ENCODE measurements at regions of chr18 and their contacts with region 1.

Region 1: DNA sequence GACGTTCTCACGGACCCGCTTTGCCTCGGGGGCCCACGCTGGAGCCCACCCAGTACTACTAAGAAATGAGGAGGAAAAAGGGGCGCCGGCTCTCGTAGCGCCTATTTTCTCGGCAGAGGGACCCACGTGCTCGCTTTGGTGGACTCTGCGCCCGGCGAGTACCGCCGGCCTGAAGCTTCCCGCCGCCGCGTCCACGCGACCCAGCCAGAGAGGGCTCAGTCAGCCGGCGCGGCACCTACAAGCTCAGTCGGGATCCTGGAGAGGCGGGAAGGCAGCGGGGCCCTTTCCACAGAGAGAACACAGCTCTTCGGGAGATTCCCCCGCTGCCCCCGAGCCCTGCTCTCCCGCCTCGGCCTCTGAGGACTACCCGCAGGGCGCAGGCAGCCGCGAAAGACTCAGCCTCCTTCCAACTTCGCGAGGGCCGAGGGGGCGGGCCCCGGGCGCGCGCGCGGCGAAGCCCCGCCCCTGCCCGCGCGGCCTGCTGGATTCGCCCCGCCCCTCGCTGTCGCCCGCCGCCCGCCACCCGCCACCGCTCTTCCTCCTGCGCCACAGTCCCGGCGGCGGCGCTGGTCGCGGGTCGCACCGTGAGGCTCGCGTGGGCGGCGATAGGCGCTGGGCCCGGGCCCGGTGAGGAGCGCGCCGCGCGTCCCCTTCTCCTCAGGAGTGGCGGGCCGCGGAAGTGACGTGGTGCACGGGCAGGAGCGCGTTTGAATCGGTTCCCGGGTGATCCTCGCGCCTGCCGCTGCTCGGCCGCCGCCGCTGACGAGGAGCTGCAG is at the start of gene SMCHD1:
- DNase-seq: peak; percentile 88
- ATAC-seq: peak; percentile 76
- H3K4me3 Mint-ChIP-seq: peak within 1 kb of the TSS; percentile 92
- H3K27ac Mint-ChIP-seq: peak within 1 kb of the TSS; percentile 95
- H3K4me1 Mint-ChIP-seq: peaks cover 41% of the 10 kb centered on the region
- H3K27me3 Mint-ChIP-seq: no peaks in the 10 kb centered on the region
- total RNA-seq, gene SMCHD1: 137 to 142 TPM

Region 2: DNA sequence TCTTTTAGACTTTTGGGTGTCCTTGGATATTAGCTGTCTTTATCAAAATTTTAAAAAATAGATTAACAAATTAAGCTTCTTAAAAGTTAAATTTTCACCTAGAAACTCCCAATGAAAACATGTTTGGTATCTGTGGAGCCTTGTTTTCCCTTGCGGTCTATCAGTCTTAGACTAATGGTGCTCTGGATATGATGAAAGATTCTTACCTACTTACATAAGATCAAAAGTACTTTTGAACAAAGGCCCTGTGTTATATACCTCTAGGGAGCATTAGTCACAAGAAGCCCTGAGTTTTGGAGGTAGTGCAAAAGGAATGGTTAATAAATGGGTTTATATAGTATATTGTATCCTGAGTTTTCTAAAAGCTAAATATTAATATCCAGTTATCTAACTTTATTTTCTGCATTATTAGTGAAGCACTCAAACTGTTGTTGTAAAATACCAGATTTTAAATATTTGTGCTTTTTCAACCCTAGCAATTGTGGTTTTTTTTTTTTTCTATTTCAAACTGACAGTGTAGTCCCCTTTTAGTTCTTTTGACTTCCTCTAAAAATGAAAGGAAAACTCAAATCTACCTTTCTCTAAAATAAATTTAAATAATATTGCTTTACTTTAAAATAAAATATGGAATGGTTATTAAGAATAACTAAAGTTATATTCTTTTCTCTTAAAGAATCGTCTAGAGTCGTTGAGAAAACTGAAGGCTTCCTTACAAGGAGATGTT is 65.9 kb before region 1 on chr18:
- CTCF ChIA-PET with region 1: interaction called, 12 read pairs
- POLR2A ChIA-PET with region 1: interaction called, 38 read pairs
- DNase-seq: no peak
- ATAC-seq: peak; percentile 72
- H3K4me3 Mint-ChIP-seq: peak overlapping the region; percentile 29
- H3K27ac Mint-ChIP-seq: peak overlapping the region; percentile 84
- H3K4me1 Mint-ChIP-seq: peaks cover 50% of the 10 kb centered on the region
- H3K27me3 Mint-ChIP-seq: no peaks in the 10 kb centered on the region

Region 3: GRCh38 chr18:2627821-2628276 is 27.5 kb before region 1 on chr18:
- CTCF ChIA-PET with region 1: interaction called, 3 read pairs
- POLR2A ChIA-PET with region 1: interaction called, 16 read pairs
- DNase-seq: no peak
- ATAC-seq: peak; percentile 65
- H3K4me3 Mint-ChIP-seq: no peak overlapping the region
- H3K27ac Mint-ChIP-seq: no peak overlapping the region
- H3K4me1 Mint-ChIP-seq: peaks cover 16% of the 10 kb centered on the region
- H3K27me3 Mint-ChIP-seq: no peaks in the 10 kb centered on the region

Region 4: GRCh38 chr18:2641638-2642037 is 13.7 kb before region 1 on chr18:
- CTCF ChIA-PET with region 1: interaction called, 33 read pairs
- POLR2A ChIA-PET with region 1: interaction called, 295 read pairs
- DNase-seq: no peak
- ATAC-seq: peak; percentile 67
- H3K4me3 Mint-ChIP-seq: peak overlapping the region; percentile 71
- H3K27ac Mint-ChIP-seq: no peak overlapping the region
- H3K4me1 Mint-ChIP-seq: peaks cover 52% of the 10 kb centered on the region
- H3K27me3 Mint-ChIP-seq: no peaks in the 10 kb centered on the region

Region 5: DNA sequence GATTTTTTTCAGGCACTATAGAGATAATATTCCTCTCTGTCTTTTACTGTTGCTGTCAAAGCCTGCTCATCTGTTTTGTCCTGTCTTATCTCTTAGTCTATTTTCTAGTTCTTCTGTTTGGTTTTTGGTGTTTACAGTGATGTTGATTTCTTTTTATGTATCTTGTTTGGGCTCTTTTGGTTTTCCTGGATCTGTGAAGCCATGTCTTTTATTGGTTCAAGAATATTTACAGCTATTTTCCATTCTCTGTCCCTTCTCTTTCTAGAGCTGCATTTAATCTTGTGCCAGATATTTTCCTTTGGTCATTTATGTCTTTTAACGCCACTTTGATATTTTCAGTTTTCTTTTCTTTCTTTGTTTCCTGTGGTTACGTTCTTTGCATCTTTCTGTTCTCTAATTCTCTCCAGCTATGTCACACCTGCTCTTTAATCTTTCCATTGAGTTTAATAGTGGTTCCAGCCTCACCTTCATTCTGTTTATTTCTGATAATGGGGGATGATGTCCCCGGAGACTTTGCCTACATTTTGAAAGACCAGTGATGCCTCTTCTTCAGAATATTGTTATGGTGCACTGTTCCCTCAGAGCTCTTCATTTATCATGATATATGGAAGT is 32.1 kb after region 1 on chr18:
- CTCF ChIA-PET with region 1: no interaction called
- POLR2A ChIA-PET with region 1: interaction called, 31 read pairs
- DNase-seq: no peak
- ATAC-seq: peak; percentile 24
- H3K4me3 Mint-ChIP-seq: no peak overlapping the region
- H3K27ac Mint-ChIP-seq: peak overlapping the region; percentile 56
- H3K4me1 Mint-ChIP-seq: peaks cover 50% of the 10 kb centered on the region
- H3K27me3 Mint-ChIP-seq: no peaks in the 10 kb centered on the region

Measured in activated CD8-positive, alpha-beta T cell treated with anti-CD3 and anti-CD28 coated beads, Interleukin-2, amount 10 ng/mL, durations not matched to agents 7 days and 5 days (primary cell).